PC-9 (cell line): ENCODE measurements at regions of chr4 and their contacts with region 1.

Region 1: GRCh38 chr4:88613417-88613875 is 21.2 kb downstream of the HERC3 start:
- DNase-seq: no peak
- H3K4me3 ChIP-seq: no peak overlapping the region
- H3K27ac ChIP-seq: peak overlapping the region; percentile 99
- H3K4me1 ChIP-seq: peaks cover 47% of the 10 kb centered on the region
- H3K27me3 ChIP-seq: no peaks in the 10 kb centered on the region
- CTCF ChIP-seq: no peak

Region 2: GRCh38 chr4:88591787-88592599 is 21.5 kb before region 1 on chr4 and contains the start of gene HERC3:
- CTCF ChIA-PET with region 1: no interaction called
- POLR2A ChIA-PET with region 1: interaction called, 8 read pairs
- intact Hi-C with region 1: loop called (anchors 2 kb)
- DNase-seq: peak; percentile 59 to 87
- H3K4me3 ChIP-seq: peak within 1 kb of the TSS; percentile 70
- H3K27ac ChIP-seq: peak within 1 kb of the TSS; percentile 50
- H3K4me1 ChIP-seq: 0 out of 2 replicates have a peak, but pooled peaks cover 8% of the 10 kb centered on the region
- H3K27me3 ChIP-seq: no peaks in the 10 kb centered on the region
- CTCF ChIP-seq: no peak
- total RNA-seq, gene HERC3: 14.7 and 16.9 TPM in 2 replicates

Region 3: DNA sequence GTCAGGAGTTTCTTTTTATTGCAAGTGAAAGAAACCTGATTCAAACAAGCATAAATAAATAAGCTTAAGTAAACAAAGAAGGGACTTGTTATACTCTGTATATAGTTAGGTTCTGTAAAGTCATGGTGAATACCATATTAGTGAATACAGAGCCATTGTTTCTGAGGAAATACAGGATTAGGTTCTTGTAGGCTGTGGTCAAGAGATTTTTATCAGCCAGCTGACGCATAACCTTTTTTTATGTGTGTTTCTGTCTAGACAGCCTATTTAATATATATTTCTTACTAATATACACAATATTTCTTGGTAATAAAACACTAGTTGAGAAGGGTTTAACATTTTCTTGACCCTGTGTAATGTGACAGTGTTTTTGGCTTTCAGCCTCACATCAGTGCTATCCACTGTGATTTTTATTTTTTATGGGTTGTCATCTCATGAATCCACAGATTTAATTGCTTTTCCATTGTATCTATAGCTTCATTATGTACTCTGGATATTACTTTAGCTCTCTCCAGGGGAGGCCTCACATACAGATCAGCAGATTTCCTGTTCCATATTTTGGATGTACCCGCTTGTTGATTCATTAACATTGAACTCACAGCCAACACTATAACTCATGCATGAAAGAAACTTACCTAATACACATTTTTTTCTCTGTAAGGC is 13.1 kb before region 1 on chr4:
- CTCF ChIA-PET with region 1: no interaction called
- POLR2A ChIA-PET with region 1: interaction called, 6 read pairs
- intact Hi-C with region 1: loop called (anchors 1 kb)
- DNase-seq: peak in 1 of 2 experiments; percentile 91
- H3K4me3 ChIP-seq: peak overlapping the region; percentile 34; the same call in 1 of the 2 replicates
- H3K27ac ChIP-seq: peak overlapping the region; percentile 97
- H3K4me1 ChIP-seq: peaks cover 35% of the 10 kb centered on the region
- H3K27me3 ChIP-seq: no peaks in the 10 kb centered on the region
- CTCF ChIP-seq: no peak

Region 4: DNA sequence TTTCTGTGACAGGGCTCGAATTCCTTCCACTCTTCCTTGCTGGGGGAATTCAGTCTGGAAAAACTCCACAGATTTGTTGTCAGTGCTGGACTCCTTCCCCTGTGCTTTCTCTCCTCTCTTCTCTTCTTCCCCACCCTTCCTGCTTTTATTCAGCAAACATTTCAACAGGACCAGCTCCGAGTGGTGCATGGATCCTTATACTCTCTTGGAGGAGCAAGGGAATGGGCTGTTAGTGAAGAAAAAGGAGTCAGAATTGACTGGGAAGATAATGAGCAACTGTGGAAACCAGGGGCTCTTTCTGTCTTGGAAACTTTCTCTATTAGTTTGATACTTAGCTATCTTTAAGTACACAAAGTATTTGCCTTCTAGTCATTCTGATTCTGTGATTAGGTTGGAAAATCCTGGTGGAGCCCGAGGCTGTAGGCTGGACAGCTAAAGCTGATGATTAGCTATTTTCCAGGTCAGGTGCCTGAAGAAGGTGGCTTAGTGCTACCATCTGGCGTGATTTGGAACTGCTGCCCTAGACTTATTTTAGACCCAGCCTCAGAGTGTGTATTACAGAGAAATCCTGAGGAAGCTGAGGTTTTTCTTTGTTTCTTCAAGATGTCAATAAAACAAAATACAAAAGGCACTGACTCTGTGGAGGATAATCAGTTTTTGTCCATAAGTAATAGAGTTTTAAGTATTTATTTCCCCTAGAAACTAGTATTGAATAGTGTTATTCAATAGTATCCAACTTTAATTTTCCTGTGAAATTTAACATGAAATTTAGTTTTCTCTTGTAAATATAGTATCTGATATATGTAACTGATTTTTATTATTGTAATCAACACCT is 45.8 kb after region 1 on chr4:
- CTCF ChIA-PET with region 1: interaction called, 10 read pairs
- POLR2A ChIA-PET with region 1: no interaction called
- intact Hi-C with region 1: loop called (anchors 1 kb)
- DNase-seq: peak; percentile 49 to 67
- H3K4me3 ChIP-seq: no peak overlapping the region
- H3K27ac ChIP-seq: peak overlapping the region; percentile 59
- H3K4me1 ChIP-seq: peaks cover 31% of the 10 kb centered on the region
- H3K27me3 ChIP-seq: no peaks in the 10 kb centered on the region
- CTCF ChIP-seq: peak; percentile 72

Region 5: DNA sequence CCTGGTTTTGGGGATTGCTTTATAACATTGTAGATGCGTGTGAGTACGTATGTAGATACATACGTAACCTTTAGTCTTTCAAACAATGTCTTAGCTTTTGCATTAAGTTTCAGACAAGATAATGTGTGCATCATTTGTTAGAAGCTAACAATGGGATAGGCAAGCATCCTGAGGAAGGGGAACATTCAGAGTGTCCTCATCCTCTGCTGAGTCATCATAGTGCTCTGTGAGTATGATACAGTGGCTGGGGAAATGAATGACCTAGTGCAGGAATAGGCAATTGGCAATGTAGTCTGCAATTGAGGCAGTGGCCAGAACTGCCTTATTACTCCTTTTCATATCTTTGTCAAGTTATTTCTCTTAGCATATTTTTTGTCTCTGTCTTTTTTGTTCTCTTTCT is 76.9 kb after region 1 on chr4:
- CTCF ChIA-PET with region 1: no interaction called
- POLR2A ChIA-PET with region 1: interaction called, 14 read pairs
- intact Hi-C with region 1: no loop called
- DNase-seq: no peak
- H3K4me3 ChIP-seq: no peak overlapping the region
- H3K27ac ChIP-seq: no peak overlapping the region
- H3K4me1 ChIP-seq: no peaks in the 10 kb centered on the region
- H3K27me3 ChIP-seq: no peaks in the 10 kb centered on the region
- CTCF ChIP-seq: no peak

Region 6: DNA sequence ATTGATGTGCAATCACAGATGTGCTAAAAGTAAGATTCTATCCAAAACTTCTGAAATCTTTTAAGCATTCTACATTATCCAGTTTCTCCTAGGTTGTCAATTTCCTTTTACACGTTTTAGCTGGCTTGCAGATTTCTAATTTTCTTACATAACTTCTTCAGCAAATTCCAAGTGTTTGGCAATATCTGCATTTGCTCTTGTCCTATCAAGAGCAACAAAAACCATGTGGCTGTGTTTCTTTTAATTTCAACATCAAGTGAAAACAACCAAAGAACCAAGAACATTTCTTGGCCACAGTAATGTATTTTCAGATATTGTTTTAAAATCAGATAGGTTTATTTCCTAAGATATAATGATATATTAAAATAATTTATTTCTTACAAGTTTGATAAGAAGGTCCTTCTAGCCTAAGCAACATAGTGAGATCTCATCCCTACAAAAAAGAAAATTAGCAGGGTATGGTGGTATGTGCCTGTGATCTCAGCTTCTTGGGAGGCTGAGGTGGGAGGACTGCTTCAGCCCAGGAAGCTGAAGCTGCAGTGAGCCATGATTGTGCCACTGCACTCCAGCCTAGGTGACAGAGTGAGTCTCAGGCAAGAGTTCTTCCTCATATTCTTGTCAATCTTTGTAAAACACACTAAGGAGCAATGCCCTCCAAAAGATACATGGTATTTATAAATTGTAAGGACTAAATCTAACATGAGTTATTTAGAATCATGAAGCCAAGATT is 215.6 kb after region 1 on chr4:
- CTCF ChIA-PET with region 1: no interaction called
- POLR2A ChIA-PET with region 1: no interaction called
- intact Hi-C with region 1: no loop called
- DNase-seq: no peak
- H3K4me3 ChIP-seq: no peak overlapping the region
- H3K27ac ChIP-seq: no peak overlapping the region
- H3K4me1 ChIP-seq: peaks cover 9% of the 10 kb centered on the region
- H3K27me3 ChIP-seq: no peaks in the 10 kb centered on the region
- CTCF ChIP-seq: no peak